A673 (cell line): ENCODE measurements at regions of chr15 and their contacts with region 1.

Region 1: GRCh38 chr15:56496635-56497034 is 31.7 kb upstream of the MNS1 start:
- DNase-seq: peak; percentile 89
- H3K4me3 ChIP-seq: no peak overlapping the region
- H3K27ac ChIP-seq: no peak overlapping the region
- H3K4me1 ChIP-seq: peaks cover 14% of the 10 kb centered on the region
- H3K27me3 ChIP-seq: no peaks in the 10 kb centered on the region
- CTCF ChIP-seq: peak; percentile 83

Region 2: DNA sequence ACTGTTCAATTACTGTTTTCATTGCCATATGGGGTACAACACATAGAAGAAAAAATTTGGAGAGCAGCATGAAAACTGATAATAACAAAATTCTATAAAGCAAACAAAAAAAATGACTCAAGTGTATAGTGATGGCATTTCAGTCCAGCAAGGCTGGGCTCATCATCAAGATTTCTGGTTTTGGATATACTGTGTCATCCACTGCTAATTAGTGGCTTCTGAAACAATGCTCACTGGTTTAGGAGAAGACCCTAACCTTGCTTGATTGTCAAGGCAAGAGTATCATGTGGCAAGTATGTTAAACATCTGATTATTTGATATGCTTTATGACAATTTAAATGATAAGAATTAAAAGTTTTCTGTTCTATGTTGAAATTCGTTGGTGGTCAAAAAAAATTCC is 349.9 kb before region 1 on chr15:
- CTCF ChIA-PET with region 1: no interaction called
- POLR2A ChIA-PET with region 1: no interaction called
- intact Hi-C with region 1: no loop called
- DNase-seq: no peak
- H3K4me3 ChIP-seq: no peak overlapping the region
- H3K27ac ChIP-seq: no peak overlapping the region
- H3K4me1 ChIP-seq: no peaks in the 10 kb centered on the region
- H3K27me3 ChIP-seq: no peaks in the 10 kb centered on the region
- CTCF ChIP-seq: no peak

Region 3: GRCh38 chr15:56356616-56357015 is 140.0 kb before region 1 on chr15:
- CTCF ChIA-PET with region 1: no interaction called
- POLR2A ChIA-PET with region 1: no interaction called
- intact Hi-C with region 1: no loop called
- DNase-seq: peak; percentile 33
- H3K4me3 ChIP-seq: no peak overlapping the region
- H3K27ac ChIP-seq: no peak overlapping the region
- H3K4me1 ChIP-seq: no peaks in the 10 kb centered on the region
- H3K27me3 ChIP-seq: no peaks in the 10 kb centered on the region
- CTCF ChIP-seq: no peak

Region 4: GRCh38 chr15:56464893-56465520 is 31.6 kb before region 1 on chr15 and contains the start of gene MNS1:
- CTCF ChIA-PET with region 1: no interaction called
- POLR2A ChIA-PET with region 1: no interaction called
- intact Hi-C with region 1: no loop called
- DNase-seq: peak; percentile 98
- H3K4me3 ChIP-seq: peak within 1 kb of the TSS; percentile 76
- H3K27ac ChIP-seq: peak within 1 kb of the TSS; percentile 50
- H3K4me1 ChIP-seq: peaks cover 17% of the 10 kb centered on the region
- H3K27me3 ChIP-seq: no peaks in the 10 kb centered on the region
- CTCF ChIP-seq: no peak
- total RNA-seq, gene MNS1: 28.7 and 29.9 TPM in 2 replicates

Region 5: DNA sequence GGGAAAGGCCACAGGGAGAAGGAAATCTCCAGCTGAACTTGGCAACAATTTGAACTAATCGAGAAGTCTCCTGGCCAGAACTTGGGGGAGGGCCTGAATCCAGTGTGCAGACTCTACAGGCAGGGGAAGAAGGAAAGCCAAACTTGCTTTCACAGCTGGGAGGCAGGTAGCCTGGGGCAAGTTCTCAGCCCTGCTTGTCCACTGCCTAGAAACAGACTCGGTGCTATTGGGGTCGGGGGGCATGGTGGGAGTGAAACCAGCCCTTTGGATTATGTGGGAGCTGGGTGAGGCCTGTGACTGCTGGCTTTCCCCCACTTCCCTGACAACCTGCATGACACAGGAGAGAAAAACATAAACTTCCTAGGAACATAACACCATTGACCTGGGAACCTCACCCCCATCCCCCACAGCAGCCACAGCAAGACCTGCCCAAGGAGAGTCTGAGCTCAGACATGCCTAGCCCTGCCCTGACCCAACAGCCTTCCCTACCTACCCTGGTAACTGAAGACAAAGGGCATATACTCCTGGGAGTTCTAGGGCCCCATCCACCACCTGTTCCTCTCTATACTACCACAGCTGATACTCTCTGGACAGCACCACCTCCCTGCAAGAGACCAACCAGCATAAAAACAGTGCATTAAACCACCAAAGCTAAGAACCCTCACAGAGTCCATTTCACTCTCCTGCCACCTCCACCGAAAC is 72.0 kb after region 1 on chr15:
- CTCF ChIA-PET with region 1: no interaction called
- POLR2A ChIA-PET with region 1: no interaction called
- intact Hi-C with region 1: loop called (anchors 2 kb)
- DNase-seq: no peak
- H3K4me3 ChIP-seq: no peak overlapping the region
- H3K27ac ChIP-seq: no peak overlapping the region
- H3K4me1 ChIP-seq: no peaks in the 10 kb centered on the region
- H3K27me3 ChIP-seq: no peaks in the 10 kb centered on the region
- CTCF ChIP-seq: no peak

Region 6: GRCh38 chr15:56608140-56608778 is 111.6 kb after region 1 on chr15:
- CTCF ChIA-PET with region 1: no interaction called
- POLR2A ChIA-PET with region 1: no interaction called
- intact Hi-C with region 1: no loop called
- DNase-seq: no peak
- H3K4me3 ChIP-seq: no peak overlapping the region
- H3K27ac ChIP-seq: no peak overlapping the region
- H3K4me1 ChIP-seq: no peaks in the 10 kb centered on the region
- H3K27me3 ChIP-seq: no peaks in the 10 kb centered on the region
- CTCF ChIP-seq: no peak

Region 7: DNA sequence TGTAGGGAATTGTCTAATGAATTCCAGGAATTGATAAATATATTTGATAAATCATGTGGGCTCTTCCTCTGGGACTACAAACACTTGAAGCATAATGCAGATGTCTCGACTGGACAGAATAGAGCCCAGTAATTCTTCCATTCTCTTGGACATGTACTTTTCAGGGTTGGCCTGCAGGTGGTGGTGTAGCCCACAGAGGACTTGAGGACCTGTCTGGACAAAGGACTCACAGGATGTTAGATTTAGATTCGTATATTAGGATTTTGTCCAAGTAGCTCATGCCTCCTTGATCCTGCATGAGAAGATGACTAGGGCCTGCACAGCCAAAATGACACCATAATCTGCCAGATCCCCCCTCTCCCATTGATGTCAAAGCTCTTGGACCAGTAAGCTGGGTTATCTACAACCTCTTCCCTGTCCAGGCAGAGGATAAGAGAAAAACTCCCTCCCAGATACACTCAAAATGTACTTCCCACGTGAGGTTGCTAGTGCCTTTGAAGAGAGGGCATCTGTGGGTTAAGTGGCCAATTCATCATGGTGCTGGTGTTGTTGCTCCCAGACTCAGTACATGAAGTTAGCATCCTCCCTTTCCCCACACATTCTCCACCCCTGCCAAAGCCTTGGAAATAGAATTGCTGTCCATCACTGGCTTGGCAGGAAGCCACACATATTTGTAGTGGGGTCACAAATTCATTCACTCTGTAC is 325.2 kb after region 1 on chr15:
- CTCF ChIA-PET with region 1: no interaction called
- POLR2A ChIA-PET with region 1: no interaction called
- intact Hi-C with region 1: loop called (anchors 2 kb)
- DNase-seq: peak; percentile 77
- H3K4me3 ChIP-seq: no peak overlapping the region
- H3K27ac ChIP-seq: no peak overlapping the region
- H3K4me1 ChIP-seq: peaks cover 39% of the 10 kb centered on the region
- H3K27me3 ChIP-seq: no peaks in the 10 kb centered on the region
- CTCF ChIP-seq: peak; percentile 73

Region 8: GRCh38 chr15:56869573-56869972 is 372.9 kb after region 1 on chr15:
- CTCF ChIA-PET with region 1: interaction called, 20 read pairs
- POLR2A ChIA-PET with region 1: no interaction called
- intact Hi-C with region 1: loop called (anchors 1 kb)
- DNase-seq: peak; percentile 73
- H3K4me3 ChIP-seq: no peak overlapping the region
- H3K27ac ChIP-seq: no peak overlapping the region
- H3K4me1 ChIP-seq: peaks cover 39% of the 10 kb centered on the region
- H3K27me3 ChIP-seq: no peaks in the 10 kb centered on the region
- CTCF ChIP-seq: peak; percentile 85

Region 9: GRCh38 chr15:57138349-57138788 is 641.7 kb after region 1 on chr15:
- CTCF ChIA-PET with region 1: no interaction called
- POLR2A ChIA-PET with region 1: no interaction called
- intact Hi-C with region 1: loop called (anchors 5 kb)
- DNase-seq: peak; percentile 86
- H3K4me3 ChIP-seq: no peak overlapping the region
- H3K27ac ChIP-seq: no peak overlapping the region
- H3K4me1 ChIP-seq: peaks cover 69% of the 10 kb centered on the region
- H3K27me3 ChIP-seq: no peaks in the 10 kb centered on the region
- CTCF ChIP-seq: peak; percentile 87

Region 10: DNA sequence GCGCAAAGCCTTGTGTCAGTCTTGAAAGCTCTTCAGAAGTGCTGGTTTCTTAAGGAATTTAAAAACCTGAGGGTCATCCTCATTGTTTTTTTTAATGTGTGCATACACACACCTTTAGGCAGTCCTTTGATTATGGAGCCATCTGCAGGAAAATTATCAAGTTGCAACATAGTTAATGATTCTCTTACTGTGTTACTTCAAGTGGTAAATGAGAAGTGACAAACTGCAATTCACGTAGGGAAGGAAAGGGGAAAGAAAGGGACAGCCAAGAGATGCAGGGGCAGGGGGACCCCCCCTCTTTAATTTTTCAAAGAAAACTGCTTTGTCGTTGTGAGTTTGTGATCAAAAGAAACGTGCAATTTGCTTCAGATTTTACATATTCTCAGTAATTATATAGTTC is 717.2 kb after region 1 on chr15:
- CTCF ChIA-PET with region 1: interaction called, 4 read pairs
- POLR2A ChIA-PET with region 1: no interaction called
- intact Hi-C with region 1: loop called (anchors 5 kb)
- DNase-seq: peak; percentile 85
- H3K4me3 ChIP-seq: peak overlapping the region; percentile 18
- H3K27ac ChIP-seq: peak overlapping the region; percentile 54
- H3K4me1 ChIP-seq: peaks cover 74% of the 10 kb centered on the region
- H3K27me3 ChIP-seq: no peaks in the 10 kb centered on the region
- CTCF ChIP-seq: peak; percentile 67